Breast epithelium (tissue), 4 donors: ENCODE measurements at regions of chr9 and their contacts with region 1.

Region 1: GRCh38 chr9:127418037-127418471 is 6.1 kb upstream of the ZNF79 start:
- DNase-seq: no peak
- H3K4me3 ChIP-seq: peak overlapping the region in 1 of 3 donors; percentile 39
- H3K27ac ChIP-seq: peak overlapping the region; percentile 63
- H3K4me1 ChIP-seq: peaks cover 0 to 8% of the 10 kb centered on the region in 2 donors
- H3K27me3 ChIP-seq: no peaks in the 10 kb centered on the region
- CTCF ChIP-seq: no peak
- POLR2A ChIP-seq: no peak

Region 2: DNA sequence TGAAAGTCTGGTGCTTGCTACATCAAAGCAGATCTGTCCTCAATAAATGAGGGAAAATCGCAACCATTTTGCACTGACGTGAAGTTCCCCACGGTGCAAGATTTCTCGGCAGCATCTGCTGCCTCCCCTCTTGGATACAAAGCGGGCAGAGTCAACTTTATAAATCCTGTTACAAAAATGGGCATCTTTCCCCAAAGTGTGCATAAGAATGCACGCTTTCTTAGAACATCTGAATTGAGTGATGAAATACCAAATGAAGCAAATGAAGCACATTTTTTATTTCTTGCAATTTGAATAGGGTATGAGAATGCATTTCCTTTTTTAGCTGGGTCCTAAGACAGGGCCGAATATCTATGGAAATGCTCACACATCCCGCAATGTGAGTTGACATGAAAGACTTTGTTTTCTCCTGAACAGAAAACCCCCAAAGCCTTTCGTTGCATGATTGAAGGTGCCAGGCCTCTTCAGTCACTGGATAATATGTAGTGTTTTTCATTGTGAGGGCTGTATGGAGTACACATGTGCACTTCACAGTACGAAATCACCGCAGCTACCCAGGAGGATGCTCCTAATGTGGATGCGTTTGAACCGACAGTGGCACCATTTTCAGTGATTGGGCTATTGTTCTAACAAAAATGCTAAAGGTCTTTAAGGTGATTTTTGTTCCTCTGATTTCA is 1691.5 kb before region 1 on chr9:
- intact Hi-C with region 1: loop called (anchors 10 kb)
- DNase-seq: no peak
- H3K4me3 ChIP-seq: no peak overlapping the region
- H3K27ac ChIP-seq: no peak overlapping the region
- H3K4me1 ChIP-seq: no peaks in the 10 kb centered on the region
- H3K27me3 ChIP-seq: no peaks in the 10 kb centered on the region
- CTCF ChIP-seq: no peak
- POLR2A ChIP-seq: no peak

Region 3: DNA sequence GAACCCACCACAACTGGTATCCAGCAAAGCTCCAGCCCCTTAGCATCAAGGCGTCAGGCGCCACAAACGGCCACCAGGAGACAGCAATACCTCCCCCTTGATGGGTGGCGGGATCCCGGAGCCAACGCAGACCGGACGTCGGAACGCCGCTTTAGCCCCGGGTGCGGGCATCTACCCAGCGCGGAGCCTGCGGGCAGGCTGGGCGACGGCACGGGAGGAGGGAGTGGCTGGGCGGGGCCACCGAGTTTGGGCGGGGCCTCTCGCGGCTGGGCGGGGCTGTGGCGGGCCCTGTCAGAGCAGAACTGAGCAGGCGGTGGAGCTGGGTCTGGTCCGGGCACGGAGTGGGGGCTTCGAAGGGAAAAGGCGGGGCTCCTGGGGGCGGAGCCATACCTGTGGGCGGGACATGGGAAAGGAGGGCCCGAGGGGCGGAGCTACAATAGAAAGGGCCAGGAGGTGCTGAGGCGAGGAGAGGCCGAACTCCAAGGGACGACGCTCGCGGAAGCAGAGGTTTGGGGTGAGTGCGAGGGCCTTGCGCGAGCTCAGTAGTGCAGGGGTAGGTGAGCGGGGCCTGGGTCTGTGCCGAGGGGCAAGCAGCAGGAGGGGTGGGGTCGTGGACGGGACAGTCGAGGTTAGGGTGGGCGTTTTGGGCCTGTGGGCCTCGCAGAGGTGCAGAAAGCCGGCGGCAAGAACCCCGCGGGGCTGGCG is 193.7 kb before region 1 on chr9:
- intact Hi-C with region 1: loop called (anchors 10 kb)
- DNase-seq: peak; percentile 90 to 94
- H3K4me3 ChIP-seq: peak overlapping the region; percentile 47 to 79 (median 76)
- H3K27ac ChIP-seq: peak overlapping the region; percentile 64 to 83
- H3K4me1 ChIP-seq: no peaks in the 10 kb centered on the region
- H3K27me3 ChIP-seq: no peaks in the 10 kb centered on the region
- CTCF ChIP-seq: peak in 2 of 3 donors; percentile 28 to 33
- POLR2A ChIP-seq: no peak

Region 4: GRCh38 chr9:127397498-127398301 is 20.4 kb before region 1 on chr9:
- intact Hi-C with region 1: no loop called
- DNase-seq: no peak
- H3K4me3 ChIP-seq: peak overlapping the region; percentile 80 to 86 (median 82)
- H3K27ac ChIP-seq: peak overlapping the region; percentile 86
- H3K4me1 ChIP-seq: peaks cover 7 to 8% of the 10 kb centered on the region in 2 donors
- H3K27me3 ChIP-seq: no peaks in the 10 kb centered on the region
- CTCF ChIP-seq: no peak
- POLR2A ChIP-seq: no peak